ENCODE measurements at regions of chr20 and their contacts with region 1.

Region 1: DNA sequence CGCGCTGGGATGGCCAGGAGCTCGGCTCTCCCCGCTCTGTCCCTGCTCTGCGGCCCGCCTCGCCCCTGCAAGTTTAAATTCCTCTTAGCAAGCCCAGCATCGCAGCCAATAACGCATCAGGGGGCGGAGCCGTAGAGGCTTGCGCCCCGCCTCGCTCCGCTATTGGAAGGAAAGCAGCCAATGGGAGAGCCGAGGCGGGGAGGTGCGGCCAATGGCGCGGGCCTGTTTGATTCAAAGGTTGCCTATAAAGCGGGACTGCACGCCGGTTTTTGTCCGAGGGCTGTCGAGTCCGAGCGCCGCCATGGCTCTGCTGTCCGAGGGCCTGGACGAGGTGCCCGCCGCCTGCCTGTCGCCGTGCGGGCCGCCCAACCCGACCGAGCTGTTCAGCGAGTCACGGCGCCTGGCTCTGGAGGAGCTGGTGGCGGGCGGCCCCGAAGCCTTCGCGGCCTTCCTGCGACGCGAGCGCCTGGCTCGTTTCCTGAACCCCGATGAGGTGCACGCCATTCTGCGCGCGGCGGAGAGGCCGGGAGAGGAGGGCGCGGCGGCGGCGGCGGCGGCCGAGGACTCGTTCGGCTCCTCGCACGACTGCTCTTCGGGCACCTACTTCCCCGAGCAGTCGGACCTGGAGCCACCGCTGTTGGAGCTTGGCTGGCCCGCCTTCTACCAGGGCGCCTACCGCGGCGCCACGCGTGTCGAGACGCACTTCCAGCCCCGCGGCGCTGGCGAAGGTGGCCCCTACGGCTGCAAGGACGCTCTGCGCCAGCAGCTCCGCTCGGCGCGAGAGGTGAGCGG is at the start of gene FAM83D:
- DNase-seq: peak; percentile 79 to 96 (median 91)
- ATAC-seq: peak; percentile 93 to 95 (median 94)
- H3K4me3 ChIP-seq: peak within 1 kb of the TSS; percentile 59 to 70
- H3K4me3 Mint-ChIP-seq: peak within 1 kb of the TSS; percentile 75 to 83 (median 77)
- H3K27ac ChIP-seq: peak within 1 kb of the TSS; percentile 36
- H3K27ac Mint-ChIP-seq: peak within 1 kb of the TSS; percentile 39 to 75
- H3K4me1 ChIP-seq: peaks cover 0 to 38% of the 10 kb centered on the region in 2 experiments
- H3K4me1 Mint-ChIP-seq: peaks cover 23 to 31% (median 28%) of the 10 kb centered on the region in 3 donors
- H3K27me3 ChIP-seq: peaks cover 0 to 4% of the 10 kb centered on the region in 2 experiments
- H3K27me3 Mint-ChIP-seq: no peaks in the 10 kb centered on the region
- total RNA-seq, gene FAM83D: 1.3 to 4.0 (median 2.4) TPM

Region 2: DNA sequence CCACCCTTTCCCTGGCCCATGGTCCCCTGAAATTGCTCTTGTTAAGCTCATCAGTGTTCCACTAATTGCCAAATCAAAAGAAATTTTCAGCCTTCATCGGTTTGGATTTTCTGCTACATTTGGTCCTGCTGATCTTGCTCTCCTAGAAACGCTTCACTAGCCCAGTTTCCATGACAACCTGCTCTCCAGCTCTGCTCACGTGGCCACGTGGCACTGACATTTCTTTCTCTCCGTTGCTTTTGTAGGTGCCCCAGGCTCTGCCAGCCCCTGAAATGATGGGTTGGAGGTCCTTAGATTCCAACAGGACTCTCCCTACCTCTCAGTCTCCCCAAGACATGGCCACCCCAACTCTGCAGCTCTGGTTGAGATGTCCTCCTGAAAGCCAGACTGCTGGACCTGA is 1451.1 kb before region 1 on chr20:
- CTCF ChIA-PET with region 1: no interaction called
- POLR2A ChIA-PET with region 1: no interaction called
- DNase-seq: no peak
- ATAC-seq: no peak
- H3K4me3 ChIP-seq: no peak overlapping the region
- H3K4me3 Mint-ChIP-seq: no peak overlapping the region
- H3K27ac ChIP-seq: no peak overlapping the region
- H3K27ac Mint-ChIP-seq: no peak overlapping the region
- H3K4me1 ChIP-seq: no peaks in the 10 kb centered on the region
- H3K4me1 Mint-ChIP-seq: no peaks in the 10 kb centered on the region
- H3K27me3 ChIP-seq: peaks cover 0 to 30% of the 10 kb centered on the region in 2 experiments
- H3K27me3 Mint-ChIP-seq: peaks cover 18 to 19% of the 10 kb centered on the region in 2 donors

Region 3: GRCh38 chr20:38907918-38908677 is 18.2 kb before region 1 on chr20:
- CTCF ChIA-PET with region 1: interaction called, 3 to 5 read pairs
- POLR2A ChIA-PET with region 1: interaction called, 3 to 15 read pairs
- DNase-seq: no peak
- ATAC-seq: no peak
- H3K4me3 ChIP-seq: no peak overlapping the region
- H3K4me3 Mint-ChIP-seq: no peak overlapping the region
- H3K27ac ChIP-seq: no peak overlapping the region
- H3K27ac Mint-ChIP-seq: no peak overlapping the region
- H3K4me1 ChIP-seq: no peaks in the 10 kb centered on the region
- H3K4me1 Mint-ChIP-seq: peaks cover 0 to 3% (median 0%) of the 10 kb centered on the region in 3 donors
- H3K27me3 ChIP-seq: no peaks in the 10 kb centered on the region
- H3K27me3 Mint-ChIP-seq: no peaks in the 10 kb centered on the region

Region 4: GRCh38 chr20:38962044-38962927 is 35.9 kb after region 1 on chr20 and contains the start of gene DHX35:
- CTCF ChIA-PET with region 1: interaction called in 1 of 2 experiments, 16 read pairs
- POLR2A ChIA-PET with region 1: no interaction called
- DNase-seq: peak; percentile 97 to 100 (median 99)
- ATAC-seq: peak; percentile 97 to 100 (median 99)
- H3K4me3 ChIP-seq: peak within 1 kb of the TSS; percentile 74 to 99
- H3K4me3 Mint-ChIP-seq: peak within 1 kb of the TSS; percentile 89 to 98 (median 92)
- H3K27ac ChIP-seq: peak within 1 kb of the TSS; percentile 58
- H3K27ac Mint-ChIP-seq: peak within 1 kb of the TSS; percentile 95
- H3K4me1 ChIP-seq: peaks cover 12 to 15% of the 10 kb centered on the region in 2 experiments
- H3K4me1 Mint-ChIP-seq: peaks cover 26 to 36% (median 33%) of the 10 kb centered on the region in 3 donors
- H3K27me3 ChIP-seq: no peaks in the 10 kb centered on the region
- H3K27me3 Mint-ChIP-seq: no peaks in the 10 kb centered on the region
- total RNA-seq, gene DHX35: 8.6 to 11.5 (median 11.2) TPM

Region 5: GRCh38 chr20:38979842-38980241 is 53.5 kb after region 1 on chr20:
- CTCF ChIA-PET with region 1: no interaction called
- POLR2A ChIA-PET with region 1: interaction called in 1 of 2 experiments, 10 read pairs
- DNase-seq: no peak
- ATAC-seq: no peak
- H3K4me3 ChIP-seq: no peak overlapping the region
- H3K4me3 Mint-ChIP-seq: no peak overlapping the region
- H3K27ac ChIP-seq: no peak overlapping the region
- H3K27ac Mint-ChIP-seq: no peak overlapping the region
- H3K4me1 ChIP-seq: no peaks in the 10 kb centered on the region
- H3K4me1 Mint-ChIP-seq: peaks cover 2 to 11% (median 6%) of the 10 kb centered on the region in 3 donors
- H3K27me3 ChIP-seq: no peaks in the 10 kb centered on the region
- H3K27me3 Mint-ChIP-seq: no peaks in the 10 kb centered on the region

Measured in T-cell (primary cell).